Activated B cell treated with CpG ODN at 0.5 μM for 24 hours (primary cell): ENCODE measurements at regions of chrX and their contacts with region 1.

Region 1: GRCh38 chrX:119617517-119618164 is 11.4 kb upstream of the NKRF start:
- DNase-seq: no peak
- ATAC-seq: peak; percentile 56
- H3K4me3 Mint-ChIP-seq: peak overlapping the region; percentile 72
- H3K27ac Mint-ChIP-seq: peak overlapping the region; percentile 90
- H3K4me1 Mint-ChIP-seq: peaks cover 77% of the 10 kb centered on the region
- H3K27me3 Mint-ChIP-seq: no peaks in the 10 kb centered on the region
- CTCF ChIP-seq: no peak

Region 2: GRCh38 chrX:119495734-119496726 is 121.6 kb before region 1 on chrX:
- CTCF ChIA-PET with region 1: no interaction called
- POLR2A ChIA-PET with region 1: no interaction called
- intact Hi-C with region 1: no loop called
- DNase-seq: no peak
- ATAC-seq: no peak
- H3K4me3 Mint-ChIP-seq: no peak overlapping the region
- H3K27ac Mint-ChIP-seq: peak overlapping the region; percentile 20
- H3K4me1 Mint-ChIP-seq: peaks cover 23% of the 10 kb centered on the region
- H3K27me3 Mint-ChIP-seq: no peaks in the 10 kb centered on the region
- CTCF ChIP-seq: no peak

Region 3: DNA sequence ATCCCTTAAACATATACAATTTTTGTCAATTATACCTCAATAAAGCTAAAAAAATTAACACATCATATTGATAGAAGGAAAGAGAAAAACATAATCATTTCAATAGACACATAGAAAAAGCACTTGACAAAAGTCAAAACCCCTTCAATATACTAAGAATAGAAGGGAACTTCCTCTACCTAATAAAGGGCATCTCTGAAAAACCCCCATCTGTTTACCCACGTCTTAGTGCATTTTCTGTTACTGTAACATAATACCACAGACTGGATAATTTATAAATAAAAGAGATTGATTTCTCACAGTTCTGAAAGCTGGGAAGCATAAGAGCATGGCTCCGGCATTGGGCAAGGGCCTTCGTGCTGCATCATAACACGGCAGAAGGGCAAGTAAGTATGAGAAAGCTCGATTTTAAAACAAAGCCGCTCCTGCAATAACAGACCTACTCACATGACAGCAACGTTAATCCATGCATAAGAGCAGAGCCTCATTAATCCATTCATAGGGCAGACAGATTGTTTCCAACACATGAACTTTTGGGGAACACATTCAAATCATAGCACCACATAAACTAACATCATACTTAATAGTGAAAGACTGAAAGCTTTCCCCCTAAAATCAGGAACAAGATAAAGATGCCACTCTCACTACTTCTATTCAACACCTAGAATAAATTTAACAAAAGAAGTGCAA is 68.2 kb before region 1 on chrX:
- CTCF ChIA-PET with region 1: no interaction called
- POLR2A ChIA-PET with region 1: interaction called, 10 read pairs
- intact Hi-C with region 1: no loop called
- DNase-seq: no peak
- ATAC-seq: peak; percentile 77
- H3K4me3 Mint-ChIP-seq: peak overlapping the region; percentile 69
- H3K27ac Mint-ChIP-seq: peak overlapping the region; percentile 88
- H3K4me1 Mint-ChIP-seq: peaks cover 34% of the 10 kb centered on the region
- H3K27me3 Mint-ChIP-seq: no peaks in the 10 kb centered on the region
- CTCF ChIP-seq: no peak

Region 4: DNA sequence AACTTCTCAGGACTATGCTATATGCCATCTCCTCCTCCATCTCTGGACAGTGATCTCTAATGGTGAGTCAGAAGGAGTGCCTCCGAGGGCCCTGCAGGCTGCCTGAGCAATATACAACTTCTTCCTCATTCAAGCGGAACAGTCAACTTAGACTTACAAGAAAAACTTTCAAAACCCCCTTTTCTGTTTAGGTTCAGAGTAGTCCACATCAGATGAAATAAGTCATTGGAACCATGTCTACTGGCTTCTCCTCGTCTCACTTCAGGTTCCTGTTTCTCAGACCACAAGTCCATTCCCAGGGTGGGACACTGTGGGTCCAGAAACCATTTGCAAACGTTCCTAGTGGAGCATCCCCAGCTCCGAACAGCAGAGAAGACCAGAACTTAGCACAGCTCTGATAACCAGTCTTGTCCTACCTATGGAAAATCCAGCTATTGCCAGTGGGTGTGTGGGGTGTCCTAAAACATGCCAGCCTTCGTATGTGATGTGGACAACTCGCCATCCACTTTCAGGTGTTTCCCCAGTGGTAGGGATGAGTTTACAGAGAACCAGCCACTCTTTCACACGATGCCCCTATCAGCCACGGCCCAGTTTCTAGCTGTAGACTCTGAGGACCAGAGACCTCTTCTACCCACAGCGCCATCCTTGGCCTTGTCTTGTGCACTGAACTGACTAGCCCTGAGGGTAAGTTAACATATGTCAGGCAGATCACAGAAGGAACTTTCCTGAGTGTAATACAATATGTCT is 21.3 kb after region 1 on chrX:
- CTCF ChIA-PET with region 1: interaction called, 8 read pairs
- POLR2A ChIA-PET with region 1: interaction called, 15 read pairs
- intact Hi-C with region 1: loop called (anchors 1 kb)
- DNase-seq: no peak
- ATAC-seq: peak; percentile 73
- H3K4me3 Mint-ChIP-seq: peak overlapping the region; percentile 56
- H3K27ac Mint-ChIP-seq: peak overlapping the region; percentile 93
- H3K4me1 Mint-ChIP-seq: peaks cover 62% of the 10 kb centered on the region
- H3K27me3 Mint-ChIP-seq: no peaks in the 10 kb centered on the region
- CTCF ChIP-seq: no peak

Region 5: GRCh38 chrX:119685225-119686066 is 67.8 kb after region 1 on chrX:
- CTCF ChIA-PET with region 1: interaction called, 3 read pairs
- POLR2A ChIA-PET with region 1: interaction called, 14 read pairs
- intact Hi-C with region 1: loop called (anchors 2 kb)
- DNase-seq: no peak
- ATAC-seq: peak; percentile 65
- H3K4me3 Mint-ChIP-seq: peak overlapping the region; percentile 83
- H3K27ac Mint-ChIP-seq: peak overlapping the region; percentile 99
- H3K4me1 Mint-ChIP-seq: peaks cover 89% of the 10 kb centered on the region
- H3K27me3 Mint-ChIP-seq: no peaks in the 10 kb centered on the region
- CTCF ChIP-seq: no peak

Region 6: GRCh38 chrX:119729408-119730201 is 112.0 kb after region 1 on chrX:
- CTCF ChIA-PET with region 1: interaction called, 16 read pairs
- POLR2A ChIA-PET with region 1: interaction called, 5 read pairs
- intact Hi-C with region 1: loop called (anchors 1 kb)
- DNase-seq: peak; percentile 30
- ATAC-seq: peak; percentile 57
- H3K4me3 Mint-ChIP-seq: no peak overlapping the region
- H3K27ac Mint-ChIP-seq: no peak overlapping the region
- H3K4me1 Mint-ChIP-seq: peaks cover 2% of the 10 kb centered on the region
- H3K27me3 Mint-ChIP-seq: no peaks in the 10 kb centered on the region
- CTCF ChIP-seq: no peak